Activated B cell treated with CpG ODN at 0.5 μM for 24 hours (primary cell): ENCODE measurements at regions of chr15 and their contacts with region 1.

Region 1: DNA sequence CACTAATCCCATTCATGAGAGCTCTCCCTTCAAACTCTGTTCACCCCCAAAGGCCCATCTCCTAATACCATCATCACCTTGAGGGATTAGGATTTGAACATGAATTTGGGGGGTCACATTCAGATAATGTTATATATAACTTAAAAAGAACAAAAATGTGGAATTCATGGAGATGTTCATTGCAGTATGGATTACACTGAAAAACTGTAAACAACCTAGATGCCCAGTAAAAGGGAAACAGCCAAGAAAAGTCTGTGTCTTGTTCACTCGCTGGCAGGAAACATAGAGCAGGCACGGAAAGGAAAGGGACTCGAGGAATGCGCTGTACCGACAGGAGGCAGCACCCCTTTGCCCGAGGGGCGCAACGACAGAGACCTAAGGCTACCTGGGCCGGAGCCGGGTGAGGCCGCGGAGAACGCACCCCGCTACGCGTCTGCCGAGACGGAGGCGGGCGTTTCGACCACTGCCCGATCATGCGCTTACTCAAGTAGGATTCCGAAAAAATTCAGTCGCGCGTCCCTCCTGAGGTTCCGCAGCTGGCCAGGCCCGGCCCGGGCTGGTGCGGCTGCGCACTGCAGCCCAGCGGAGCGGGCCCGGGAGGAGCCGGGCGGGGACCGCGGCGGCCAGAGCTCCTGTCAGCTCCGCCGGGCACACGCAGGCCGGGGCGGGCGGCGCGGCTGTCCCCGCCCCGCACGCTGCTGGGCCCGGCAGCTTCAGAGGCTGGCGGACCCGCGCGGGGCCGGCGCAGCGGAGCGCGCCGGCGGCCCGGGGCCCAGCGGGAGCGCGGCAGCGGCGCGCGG is 862 bp upstream of the MAN2A2 start:
- DNase-seq: peak; percentile 75
- ATAC-seq: peak; percentile 71
- H3K4me3 Mint-ChIP-seq: peak overlapping the region; percentile 87
- H3K27ac Mint-ChIP-seq: peak overlapping the region; percentile 86
- H3K4me1 Mint-ChIP-seq: peaks cover 34% of the 10 kb centered on the region
- H3K27me3 Mint-ChIP-seq: no peaks in the 10 kb centered on the region
- CTCF ChIP-seq: no peak

Region 2: DNA sequence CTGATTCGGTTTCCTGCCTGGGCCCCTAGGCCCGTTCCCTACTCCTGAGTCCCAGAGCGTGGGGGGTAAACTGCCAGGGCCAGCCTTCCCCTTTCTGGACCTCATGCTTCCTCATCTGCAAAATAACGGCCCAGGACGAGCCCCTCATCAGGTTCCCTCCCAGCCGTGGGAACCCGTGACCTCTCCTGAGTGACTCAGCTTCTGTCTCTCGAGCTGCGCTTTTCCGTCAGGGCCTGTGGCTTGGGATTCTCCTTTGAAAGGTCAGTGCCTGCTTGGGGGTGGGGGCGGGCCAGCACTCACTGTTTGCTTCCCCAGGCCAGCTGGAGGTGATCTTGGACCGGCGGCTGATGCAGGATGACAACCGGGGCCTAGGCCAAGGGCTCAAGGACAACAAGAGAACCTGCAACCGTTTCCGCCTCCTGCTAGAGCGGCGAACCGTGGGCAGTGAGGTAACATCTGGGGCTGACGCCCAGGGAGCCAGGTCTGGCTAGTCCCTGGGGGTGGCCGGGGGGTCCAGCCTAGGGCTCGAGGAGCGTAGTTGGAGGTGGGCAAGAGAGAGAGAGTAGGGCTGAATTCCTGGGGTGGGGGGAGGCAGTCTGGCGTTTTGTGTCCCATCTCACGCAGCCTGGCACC is 13.7 kb after region 1 on chr15:
- CTCF ChIA-PET with region 1: no interaction called
- POLR2A ChIA-PET with region 1: interaction called, 4 read pairs
- intact Hi-C with region 1: loop called (anchors 1 kb)
- DNase-seq: no peak
- ATAC-seq: peak; percentile 31
- H3K4me3 Mint-ChIP-seq: no peak overlapping the region
- H3K27ac Mint-ChIP-seq: peak overlapping the region; percentile 21
- H3K4me1 Mint-ChIP-seq: peaks cover 10% of the 10 kb centered on the region
- H3K27me3 Mint-ChIP-seq: no peaks in the 10 kb centered on the region
- CTCF ChIP-seq: no peak

Region 3: GRCh38 chr15:91456251-91456738 is 554.1 kb after region 1 on chr15:
- CTCF ChIA-PET with region 1: no interaction called
- POLR2A ChIA-PET with region 1: no interaction called
- intact Hi-C with region 1: no loop called
- DNase-seq: no peak
- ATAC-seq: no peak
- H3K4me3 Mint-ChIP-seq: no peak overlapping the region
- H3K27ac Mint-ChIP-seq: no peak overlapping the region
- H3K4me1 Mint-ChIP-seq: no peaks in the 10 kb centered on the region
- H3K27me3 Mint-ChIP-seq: no peaks in the 10 kb centered on the region
- CTCF ChIP-seq: no peak